ENCODE measurements at regions of chr11 and their contacts with region 1.

Region 1: DNA sequence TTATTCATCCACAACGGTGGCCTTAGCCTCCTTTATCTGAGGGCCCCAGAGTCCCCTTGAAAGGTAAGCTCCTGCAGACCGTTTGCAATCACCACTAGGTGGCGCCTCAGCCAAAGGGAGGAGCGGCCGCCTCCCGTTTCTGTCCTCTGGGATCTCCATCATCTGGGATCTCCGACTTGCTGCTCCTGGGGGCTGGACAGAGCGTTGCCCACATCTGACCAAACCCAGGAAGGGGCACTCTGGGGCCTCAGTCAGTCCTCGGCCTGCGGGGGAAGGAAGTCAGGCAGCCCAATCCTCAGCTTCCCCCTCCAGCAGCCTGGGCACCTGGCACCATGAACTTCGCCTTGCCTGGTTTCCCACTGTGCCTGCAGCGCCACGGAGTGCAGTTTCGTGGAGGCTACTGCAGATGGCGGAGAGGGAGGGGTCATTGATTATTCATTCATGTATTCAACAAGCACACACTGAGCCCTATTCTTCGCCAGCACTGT is 23.5 kb downstream of the TP53I11 start:
- DNase-seq: peak; percentile 32
- H3K4me3 ChIP-seq: no peak overlapping the region
- H3K27ac ChIP-seq: no peak overlapping the region
- H3K4me1 ChIP-seq: no peaks in the 10 kb centered on the region
- H3K27me3 ChIP-seq: peaks cover 5% of the 10 kb centered on the region
- CTCF ChIP-seq: peak; percentile 75 to 87

Region 2: GRCh38 chr11:44456544-44457300 is 470.5 kb before region 1 on chr11:
- CTCF ChIA-PET with region 1: no interaction called
- dilution Hi-C with region 1: no loop called
- in situ Hi-C with region 1: no loop called
- intact Hi-C with region 1: no loop called
- DNase-seq: no peak
- H3K4me3 ChIP-seq: no peak overlapping the region
- H3K27ac ChIP-seq: no peak overlapping the region
- H3K4me1 ChIP-seq: no peaks in the 10 kb centered on the region
- H3K27me3 ChIP-seq: no peaks in the 10 kb centered on the region
- CTCF ChIP-seq: peak; percentile 48

Region 3: DNA sequence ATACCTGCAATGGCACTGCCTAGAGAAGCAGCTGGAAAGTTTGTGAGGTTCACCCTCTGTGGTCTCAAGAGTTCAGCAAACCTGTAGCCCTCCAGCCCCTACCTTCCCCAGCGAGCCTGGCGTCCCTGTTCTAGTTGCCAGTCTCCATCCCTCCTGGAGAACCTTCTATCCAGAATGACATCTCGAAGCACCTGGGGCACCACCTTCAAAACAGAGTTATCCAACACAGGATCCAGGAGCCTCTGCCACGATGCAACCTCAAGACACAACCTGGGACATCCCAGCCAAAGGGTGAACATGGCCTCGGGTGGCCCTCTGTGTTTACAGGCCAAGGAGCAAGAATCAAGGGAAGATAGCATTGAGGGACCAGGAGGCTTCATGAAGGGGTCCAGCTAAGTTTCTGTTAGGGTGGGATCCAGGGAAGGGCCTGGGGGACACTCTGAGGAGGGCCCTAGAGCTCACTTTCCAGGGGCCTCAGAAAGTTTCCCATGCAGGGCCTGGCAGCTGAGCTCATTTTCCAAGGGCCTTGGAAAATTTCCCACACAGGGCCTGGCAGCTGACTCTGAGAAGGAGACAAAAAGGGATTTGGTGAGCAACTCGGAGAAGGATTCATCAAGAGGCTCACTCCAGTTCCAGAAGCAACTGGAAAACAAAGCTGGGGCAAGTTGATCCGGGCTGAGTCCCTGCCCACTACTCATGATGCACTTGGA is 395.8 kb after region 1 on chr11:
- CTCF ChIA-PET with region 1: no interaction called
- dilution Hi-C with region 1: no loop called
- in situ Hi-C with region 1: loop called in 1 of 2 experiments (anchors 10 kb)
- intact Hi-C with region 1: no loop called
- DNase-seq: no peak
- H3K4me3 ChIP-seq: no peak overlapping the region
- H3K27ac ChIP-seq: no peak overlapping the region
- H3K4me1 ChIP-seq: no peaks in the 10 kb centered on the region
- H3K27me3 ChIP-seq: no peaks in the 10 kb centered on the region
- CTCF ChIP-seq: no peak

Region 4: GRCh38 chr11:45332276-45332934 is 405.2 kb after region 1 on chr11:
- CTCF ChIA-PET with region 1: interaction called, 3 read pairs
- dilution Hi-C with region 1: no loop called
- in situ Hi-C with region 1: loop called in 1 of 2 experiments (anchors 10 kb)
- intact Hi-C with region 1: loop called (anchors 2 kb)
- DNase-seq: no peak
- H3K4me3 ChIP-seq: no peak overlapping the region
- H3K27ac ChIP-seq: no peak overlapping the region
- H3K4me1 ChIP-seq: no peaks in the 10 kb centered on the region
- H3K27me3 ChIP-seq: no peaks in the 10 kb centered on the region
- CTCF ChIP-seq: peak; percentile 38 to 60

Measured in mammary epithelial cell (primary cell).